ENCODE measurements at regions of chr12 and their contacts with region 1.

Region 1: GRCh38 chr12:14769969-14770495 is 33.2 kb downstream of the WBP11 start:
- DNase-seq: peak; percentile 95
- H3K4me3 Mint-ChIP-seq: peak overlapping the region; percentile 96
- H3K27ac Mint-ChIP-seq: peak overlapping the region; percentile 99
- H3K4me1 Mint-ChIP-seq: peaks cover 51% of the 10 kb centered on the region
- H3K27me3 Mint-ChIP-seq: no peaks in the 10 kb centered on the region

Region 2: GRCh38 chr12:14239350-14239934 is 530.6 kb before region 1 on chr12:
- intact Hi-C with region 1: loop called (anchors 5 kb)
- DNase-seq: peak; percentile 74
- H3K4me3 Mint-ChIP-seq: peak overlapping the region; percentile 82
- H3K27ac Mint-ChIP-seq: peak overlapping the region; percentile 82
- H3K4me1 Mint-ChIP-seq: peaks cover 20% of the 10 kb centered on the region
- H3K27me3 Mint-ChIP-seq: no peaks in the 10 kb centered on the region

Region 3: DNA sequence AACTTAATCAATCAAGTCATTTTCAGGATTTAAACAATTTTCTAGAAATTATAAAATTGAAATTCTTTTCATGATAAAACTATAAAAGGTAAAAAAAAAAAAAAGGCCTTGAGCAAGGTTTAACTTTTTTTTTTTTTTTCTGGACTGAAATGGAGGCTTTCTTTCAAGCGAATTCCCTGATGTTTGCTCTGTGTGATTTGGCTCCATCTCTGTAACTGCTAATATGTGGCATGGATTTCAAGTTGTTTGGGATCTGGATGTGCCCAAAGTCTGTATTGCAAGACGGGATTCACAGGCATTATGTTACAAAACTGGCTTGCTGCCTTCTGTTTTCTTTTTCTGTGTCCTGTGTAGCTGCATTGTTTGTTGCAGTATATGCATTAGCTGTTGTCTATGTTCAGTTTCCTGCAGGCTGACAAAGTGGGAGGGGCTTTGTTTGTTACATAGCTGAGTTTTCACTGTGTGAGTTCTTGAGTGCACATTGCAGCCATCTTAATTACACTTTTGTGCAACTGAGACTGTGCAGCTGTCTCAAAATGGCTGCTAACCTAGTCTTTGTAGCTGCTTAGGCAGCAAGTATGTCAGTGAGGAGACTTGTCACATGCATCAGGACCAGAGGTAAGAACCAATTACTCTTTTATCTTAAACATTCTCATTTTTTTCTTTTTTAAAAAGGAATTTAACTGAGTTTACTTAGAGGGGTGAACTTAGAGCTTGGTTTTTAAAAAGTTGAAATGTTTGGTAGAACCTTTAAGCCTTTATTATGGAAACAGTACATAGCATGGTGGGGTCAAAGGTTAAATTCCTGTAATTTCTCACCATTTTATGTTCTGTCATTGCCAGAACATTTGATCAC is 385.0 kb before region 1 on chr12:
- intact Hi-C with region 1: loop called (anchors 1 kb)
- DNase-seq: peak; percentile 91
- H3K4me3 Mint-ChIP-seq: peak overlapping the region; percentile 77
- H3K27ac Mint-ChIP-seq: peak overlapping the region; percentile 84
- H3K4me1 Mint-ChIP-seq: peaks cover 44% of the 10 kb centered on the region
- H3K27me3 Mint-ChIP-seq: no peaks in the 10 kb centered on the region

Region 4: DNA sequence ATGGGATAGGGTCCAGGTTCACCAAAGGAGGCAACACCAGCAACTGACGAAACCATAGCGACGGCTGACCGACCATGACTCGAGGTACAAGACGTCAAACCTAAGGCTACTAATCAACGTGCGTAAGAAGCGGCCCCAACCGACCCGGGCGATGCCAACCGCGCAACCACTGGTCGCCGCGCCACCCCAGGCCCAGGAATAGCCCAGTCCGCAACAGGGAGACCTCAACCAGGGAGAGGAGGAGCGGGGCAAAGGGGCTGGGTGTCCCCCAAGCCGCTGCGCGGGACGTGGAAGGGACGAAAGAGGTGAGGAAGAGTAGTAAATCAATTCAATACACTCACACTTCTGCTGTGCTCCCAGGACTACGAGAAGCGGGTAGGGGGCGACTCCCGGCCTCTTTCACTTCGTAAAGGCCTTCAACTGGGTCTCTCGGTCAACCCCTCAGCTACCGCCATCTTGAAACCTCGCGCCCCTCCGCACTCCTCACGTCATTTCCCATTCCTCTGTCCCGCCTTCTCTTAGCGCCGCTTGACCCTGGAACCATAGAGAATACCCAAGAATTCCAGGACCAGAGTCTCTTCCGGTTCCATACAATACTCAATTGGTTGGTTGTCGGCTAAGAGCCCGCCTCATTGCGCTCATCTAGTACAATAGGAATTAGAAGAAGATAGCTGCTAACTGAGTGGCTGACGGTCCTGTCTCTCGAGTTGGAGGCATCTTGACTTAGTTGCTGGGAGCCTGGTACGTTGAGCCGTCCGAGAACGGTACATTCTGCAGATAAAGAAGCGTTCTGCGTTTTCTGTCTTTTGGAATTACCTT is 33.2 kb after region 1 on chr12 and contains the starts of genes C12orf60 and WBP11:
- intact Hi-C with region 1: loop called (anchors 1 kb)
- DNase-seq: peak; percentile 96
- H3K4me3 Mint-ChIP-seq: no peak within 1 kb of the TSS
- H3K27ac Mint-ChIP-seq: no peak within 1 kb of the TSS
- H3K4me1 Mint-ChIP-seq: peaks cover 22% of the 10 kb centered on the region
- H3K27me3 Mint-ChIP-seq: no peaks in the 10 kb centered on the region
- total RNA-seq, gene C12orf60: 2.2 and 3.0 TPM in 2 replicates
- total RNA-seq, gene WBP11: 136 and 138 TPM in 2 replicates

Region 5: GRCh38 chr12:15575671-15576541 is 805.9 kb after region 1 on chr12:
- intact Hi-C with region 1: loop called (anchors 5 kb)
- DNase-seq: peak; percentile 50
- H3K4me3 Mint-ChIP-seq: no peak overlapping the region
- H3K27ac Mint-ChIP-seq: peak overlapping the region; percentile 60
- H3K4me1 Mint-ChIP-seq: peaks cover 39% of the 10 kb centered on the region
- H3K27me3 Mint-ChIP-seq: no peaks in the 10 kb centered on the region